ENCODE measurements at regions of chr14 and their contacts with region 1.

Region 1: DNA sequence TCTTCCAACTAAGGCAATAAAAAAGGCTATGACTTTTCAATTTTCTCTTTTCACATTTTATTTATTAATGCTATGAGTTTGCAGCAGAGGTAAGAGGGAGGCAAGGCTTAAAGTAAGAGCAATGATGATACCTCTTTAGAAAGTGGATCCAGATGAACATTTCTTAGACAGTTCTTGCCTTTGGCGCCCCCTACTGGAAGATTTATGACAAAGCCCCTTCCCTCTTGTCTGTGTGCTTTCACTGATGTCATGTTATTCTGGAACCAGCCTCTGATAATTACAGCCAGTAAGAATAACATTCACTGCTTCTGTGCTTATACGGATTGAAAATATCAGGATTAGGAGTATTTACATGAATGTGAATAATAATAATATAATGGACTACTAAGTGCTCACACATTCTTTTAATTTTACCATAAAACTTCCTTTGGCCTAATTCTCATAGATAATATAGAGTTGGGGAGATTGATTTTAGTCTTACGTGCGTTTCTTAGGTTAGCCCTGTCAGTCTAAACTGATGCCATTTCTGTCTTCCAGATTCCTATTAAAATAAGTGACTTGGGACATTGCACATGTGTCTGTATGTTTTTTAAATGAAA is 1929.9 kb upstream of the SEL1L start:
- DNase-seq: no peak
- H3K4me3 ChIP-seq: no peak overlapping the region
- H3K27ac ChIP-seq: no peak overlapping the region
- H3K4me1 ChIP-seq: no peaks in the 10 kb centered on the region
- H3K27me3 ChIP-seq: no peaks in the 10 kb centered on the region
- CTCF ChIP-seq: peak; percentile 81

Region 2: GRCh38 chr14:83140756-83141155 is 322.8 kb before region 1 on chr14:
- intact Hi-C with region 1: no loop called
- DNase-seq: no peak
- H3K4me3 ChIP-seq: no peak overlapping the region
- H3K27ac ChIP-seq: no peak overlapping the region
- H3K4me1 ChIP-seq: no peaks in the 10 kb centered on the region
- H3K27me3 ChIP-seq: no peaks in the 10 kb centered on the region
- CTCF ChIP-seq: no peak

Region 3: DNA sequence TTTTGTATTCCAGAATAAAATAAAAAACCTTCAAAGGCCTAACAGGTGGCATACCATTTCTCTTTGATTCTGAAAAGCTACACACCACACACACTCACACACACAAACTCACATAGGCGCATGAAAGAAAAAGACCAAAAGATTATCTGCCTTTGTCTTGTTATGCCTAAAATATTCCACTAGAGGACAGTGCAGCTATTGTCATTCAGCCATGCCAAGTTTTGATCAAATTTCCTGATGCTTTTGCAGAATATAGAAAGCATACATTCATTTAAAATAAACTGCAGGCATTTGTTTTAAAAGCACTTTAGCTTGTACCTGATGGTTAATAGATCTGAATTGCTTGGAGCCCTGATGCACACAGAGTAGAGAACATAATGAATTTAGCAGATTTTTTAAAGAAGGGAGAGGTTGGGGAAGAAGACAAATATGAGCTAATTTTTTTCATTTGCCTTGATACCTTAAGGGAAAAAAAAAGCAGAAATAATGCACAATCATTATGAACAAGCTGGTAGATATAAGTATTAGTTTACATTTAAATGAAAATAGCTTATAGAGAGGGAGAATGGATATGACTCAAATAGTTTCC is 163.0 kb before region 1 on chr14:
- intact Hi-C with region 1: loop called (anchors 10 kb)
- DNase-seq: no peak
- H3K4me3 ChIP-seq: no peak overlapping the region
- H3K27ac ChIP-seq: no peak overlapping the region
- H3K4me1 ChIP-seq: no peaks in the 10 kb centered on the region
- H3K27me3 ChIP-seq: no peaks in the 10 kb centered on the region
- CTCF ChIP-seq: peak; percentile 85

Measured in left ventricle myocardium inferior (tissue), 1 donor.